OCI-LY7 (cell line): ENCODE measurements at regions of chr9 and their contacts with region 1.

Region 1: GRCh38 chr9:133478851-133479711 is at the start of gene SLC2A6:
- DNase-seq: peak; percentile 91
- H3K4me3 ChIP-seq: peak within 1 kb of the TSS; percentile 78
- H3K27ac ChIP-seq: peak within 1 kb of the TSS; percentile 73
- H3K4me1 ChIP-seq: peaks cover 28% of the 10 kb centered on the region
- CTCF ChIP-seq: no peak
- total RNA-seq, gene SLC2A6: 45.2 and 52.9 TPM in 2 replicates

Region 2: DNA sequence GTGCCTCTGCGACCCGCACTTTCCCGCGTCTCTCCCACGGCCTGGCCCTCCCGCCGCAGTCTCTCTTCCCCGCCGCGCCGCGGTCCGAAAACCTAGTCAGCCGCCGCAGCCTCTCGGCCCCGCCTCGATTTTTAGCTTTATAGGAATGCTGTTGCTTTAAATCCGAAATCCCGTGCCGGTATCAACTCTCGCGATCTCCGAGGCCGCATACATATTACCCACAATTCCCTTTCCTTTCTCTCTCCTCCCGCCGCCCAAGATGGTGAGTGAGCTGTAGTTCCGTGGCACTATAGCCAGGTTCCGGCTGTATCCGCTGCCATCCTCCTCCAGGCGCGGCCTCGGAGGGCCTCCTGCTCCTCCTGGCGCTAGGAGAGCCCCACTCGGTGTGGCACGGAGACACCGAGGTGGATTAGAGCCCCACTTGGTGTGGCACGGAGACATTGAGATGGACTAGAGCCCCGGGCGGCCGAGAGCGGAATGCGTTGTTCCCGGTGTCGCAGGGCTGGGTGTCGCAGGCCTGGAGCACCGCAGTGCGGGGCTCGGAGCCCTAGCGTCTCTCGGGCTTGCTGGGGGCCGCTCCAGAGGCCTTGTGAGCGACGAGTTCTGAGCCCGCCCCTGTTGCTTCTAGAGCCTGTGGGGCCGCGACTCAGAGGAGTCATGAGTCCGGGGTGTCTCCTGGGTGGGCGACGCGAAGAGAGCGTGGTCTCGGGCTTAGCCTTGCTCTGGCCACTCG is 130.9 kb before region 1 on chr9 and contains the starts of genes MED22 and RPL7A:
- CTCF ChIA-PET with region 1: no interaction called
- POLR2A ChIA-PET with region 1: no interaction called
- intact Hi-C with region 1: loop called (anchors 5 kb)
- DNase-seq: peak; percentile 96
- H3K4me3 ChIP-seq: peak within 1 kb of the TSS; percentile 99
- H3K27ac ChIP-seq: peak within 1 kb of the TSS; percentile 87
- H3K4me1 ChIP-seq: peaks cover 35% of the 10 kb centered on the region
- CTCF ChIP-seq: no peak
- total RNA-seq, gene MED22: 39.6 and 62.1 TPM in 2 replicates
- total RNA-seq, gene RPL7A: 2,961 and 2,981 TPM in 2 replicates

Region 3: GRCh38 chr9:133417541-133418461 is 61.3 kb before region 1 on chr9 and contains the start of gene REXO4:
- CTCF ChIA-PET with region 1: no interaction called
- POLR2A ChIA-PET with region 1: no interaction called
- intact Hi-C with region 1: loop called (anchors 1 kb)
- DNase-seq: peak; percentile 95
- H3K4me3 ChIP-seq: peak within 1 kb of the TSS; percentile 88
- H3K27ac ChIP-seq: peak within 1 kb of the TSS; percentile 65
- H3K4me1 ChIP-seq: peaks cover 50% of the 10 kb centered on the region
- CTCF ChIP-seq: no peak
- total RNA-seq, gene REXO4: 33.6 and 35.7 TPM in 2 replicates

Region 4: GRCh38 chr9:133459476-133460404 is 19.3 kb before region 1 on chr9 and contains the start of gene CACFD1:
- CTCF ChIA-PET with region 1: interaction called, 5 read pairs
- POLR2A ChIA-PET with region 1: interaction called, 6 read pairs
- intact Hi-C with region 1: loop called (anchors 1 kb)
- DNase-seq: peak; percentile 96
- H3K4me3 ChIP-seq: peak within 1 kb of the TSS; percentile 74
- H3K27ac ChIP-seq: peak within 1 kb of the TSS; percentile 77
- H3K4me1 ChIP-seq: peaks cover 51% of the 10 kb centered on the region
- CTCF ChIP-seq: no peak
- total RNA-seq, gene CACFD1: 14.9 and 17.2 TPM in 2 replicates

Region 5: DNA sequence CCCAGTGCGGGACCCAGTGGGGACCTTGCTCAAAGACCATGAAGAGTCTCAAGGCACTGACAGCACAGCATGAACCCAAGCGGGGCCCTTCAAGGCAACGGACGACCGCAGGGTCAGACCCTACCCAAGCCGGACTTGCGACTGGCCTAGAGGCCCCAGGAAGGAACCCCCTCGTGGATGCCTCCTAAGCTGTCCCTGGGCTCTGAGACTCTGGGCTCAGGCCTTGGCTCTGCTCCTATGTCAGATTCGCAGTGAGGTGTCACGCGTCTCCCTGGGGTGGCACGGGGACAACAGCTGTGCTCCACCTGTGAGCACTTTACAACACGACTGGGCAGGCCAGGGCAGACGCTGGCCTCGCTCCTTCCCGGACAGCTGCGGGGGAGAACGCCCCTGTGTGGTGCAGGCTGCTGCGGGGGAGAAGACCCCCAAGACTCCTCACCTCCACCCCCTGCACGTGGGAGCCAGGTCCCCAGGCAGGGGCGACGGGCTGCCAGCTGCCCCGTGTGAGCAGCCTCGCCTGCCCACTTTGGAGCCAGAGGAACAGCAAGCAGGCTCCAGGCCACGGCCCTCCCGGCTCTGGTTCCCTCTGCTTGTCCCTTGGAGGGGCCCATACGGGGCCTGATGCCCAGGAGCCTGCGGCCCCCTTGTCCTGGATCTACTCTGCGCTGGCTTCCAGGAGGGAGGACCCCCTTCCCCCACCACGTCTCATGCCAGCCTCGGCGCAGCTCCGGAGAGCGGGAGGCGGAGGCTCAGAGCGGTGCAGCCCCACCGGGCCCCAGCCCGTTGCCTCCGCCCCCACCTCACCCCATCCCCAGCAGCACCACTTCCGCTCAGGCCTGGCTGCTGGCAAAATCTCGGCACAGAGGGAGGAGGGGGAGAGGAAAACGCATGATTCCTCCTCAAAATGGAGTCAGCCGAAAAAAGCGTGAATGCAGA is 223.0 kb after region 1 on chr9:
- CTCF ChIA-PET with region 1: no interaction called
- POLR2A ChIA-PET with region 1: no interaction called
- intact Hi-C with region 1: loop called (anchors 5 kb)
- DNase-seq: peak; percentile 88
- H3K4me3 ChIP-seq: peak overlapping the region; percentile 73
- H3K27ac ChIP-seq: peak overlapping the region; percentile 91
- H3K4me1 ChIP-seq: peaks cover 83% of the 10 kb centered on the region
- CTCF ChIP-seq: no peak